Activated CD8-positive, alpha-beta T cell treated with anti-CD3 and anti-CD28 coated beads for 36 hours (primary cell): ENCODE measurements at regions of chr12 and their contacts with region 1.

Region 1: DNA sequence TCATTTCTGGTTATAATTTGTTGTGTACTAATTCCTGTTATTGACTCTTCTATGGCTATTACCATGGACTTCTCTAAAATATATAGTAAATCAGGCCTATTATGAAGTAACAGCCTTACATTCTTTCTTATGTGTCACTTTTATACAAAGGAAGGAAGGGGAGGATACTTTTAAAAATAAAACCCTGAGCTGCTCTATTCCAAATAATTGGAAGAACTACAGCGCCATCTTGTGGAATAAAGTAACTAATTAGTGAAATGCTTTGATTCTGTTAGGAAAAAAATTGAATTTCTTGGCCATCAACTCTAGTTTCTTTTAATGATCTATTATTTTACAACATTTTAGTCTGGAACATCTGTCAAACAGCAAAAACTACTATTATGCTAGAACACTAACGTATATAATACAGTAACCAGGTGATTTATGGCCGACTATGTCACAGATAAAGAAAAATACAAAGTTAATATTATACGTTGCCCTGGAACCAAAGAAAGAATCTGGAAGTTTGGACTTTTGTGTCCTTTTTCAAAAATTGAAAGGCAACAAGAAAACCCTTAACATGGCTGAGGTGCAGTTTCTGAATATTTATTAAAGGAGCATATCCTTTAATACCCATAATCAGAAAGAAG is 55.0 kb upstream of the NELL2 start:
- DNase-seq: no peak
- ATAC-seq: peak; percentile 58
- H3K4me3 Mint-ChIP-seq: no peak overlapping the region
- H3K27ac Mint-ChIP-seq: no peak overlapping the region
- H3K4me1 Mint-ChIP-seq: no peaks in the 10 kb centered on the region
- H3K27me3 Mint-ChIP-seq: no peaks in the 10 kb centered on the region
- CTCF ChIP-seq: peak; percentile 70

Region 2: DNA sequence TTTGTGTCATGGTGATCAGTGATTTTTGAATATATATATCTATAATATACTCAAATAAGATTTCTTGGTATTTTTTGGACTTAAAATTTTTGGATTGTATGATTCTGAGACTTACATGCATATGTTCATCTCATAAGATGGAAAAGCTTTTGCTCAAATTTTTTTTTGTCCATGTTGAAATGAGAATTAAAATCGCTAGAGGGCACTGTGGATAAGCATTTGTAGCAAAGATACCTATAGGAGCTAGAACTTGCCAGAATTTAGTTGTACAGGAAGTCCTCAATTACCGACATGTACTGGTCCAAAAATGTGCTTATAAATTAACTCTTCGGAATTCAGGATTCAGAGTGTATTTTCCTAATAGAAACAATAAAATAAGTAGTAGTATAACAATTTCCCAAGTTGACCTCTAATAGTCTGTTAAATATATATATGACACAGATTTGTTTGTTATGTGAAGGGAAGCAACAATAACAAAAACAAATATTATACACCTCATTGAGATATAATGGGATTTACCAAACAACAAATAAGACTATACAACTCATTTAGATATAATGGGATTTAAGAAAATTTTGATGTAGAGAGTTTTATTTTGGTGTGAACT is 915.6 kb before region 1 on chr12:
- CTCF ChIA-PET with region 1: interaction called, 11 read pairs
- POLR2A ChIA-PET with region 1: no interaction called
- intact Hi-C with region 1: loop called (anchors 10 kb)
- DNase-seq: no peak
- ATAC-seq: peak; percentile 47
- H3K4me3 Mint-ChIP-seq: no peak overlapping the region
- H3K27ac Mint-ChIP-seq: no peak overlapping the region
- H3K4me1 Mint-ChIP-seq: no peaks in the 10 kb centered on the region
- H3K27me3 Mint-ChIP-seq: no peaks in the 10 kb centered on the region
- CTCF ChIP-seq: peak; percentile 66

Region 3: DNA sequence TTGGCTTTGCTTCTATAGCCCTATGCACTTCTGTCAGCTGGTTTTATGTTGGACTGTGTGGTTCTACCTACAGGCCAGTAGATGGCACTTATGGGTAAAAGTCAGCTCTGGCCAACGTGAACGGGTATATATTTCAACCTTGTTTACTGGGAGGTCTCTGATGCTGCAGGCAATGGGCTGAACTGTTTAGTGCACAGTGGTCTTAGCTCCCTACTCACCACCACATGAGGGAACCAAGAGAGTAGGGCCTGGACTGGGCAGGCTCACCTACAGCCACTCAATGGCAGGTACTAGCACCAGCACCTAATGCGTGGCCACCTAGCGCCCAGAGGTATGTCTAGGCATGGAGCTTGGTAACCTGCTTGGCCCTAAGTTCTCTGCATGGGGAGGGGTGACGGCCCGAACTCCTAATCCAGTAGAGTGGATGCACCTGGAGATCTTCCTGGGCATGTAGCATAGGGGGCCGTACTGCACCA is 613.4 kb before region 1 on chr12:
- CTCF ChIA-PET with region 1: interaction called, 7 read pairs
- POLR2A ChIA-PET with region 1: no interaction called
- intact Hi-C with region 1: loop called (anchors 5 kb)
- DNase-seq: peak; percentile 5
- ATAC-seq: peak; percentile 83
- H3K4me3 Mint-ChIP-seq: no peak overlapping the region
- H3K27ac Mint-ChIP-seq: no peak overlapping the region
- H3K4me1 Mint-ChIP-seq: no peaks in the 10 kb centered on the region
- H3K27me3 Mint-ChIP-seq: no peaks in the 10 kb centered on the region
- CTCF ChIP-seq: peak; percentile 34

Region 4: DNA sequence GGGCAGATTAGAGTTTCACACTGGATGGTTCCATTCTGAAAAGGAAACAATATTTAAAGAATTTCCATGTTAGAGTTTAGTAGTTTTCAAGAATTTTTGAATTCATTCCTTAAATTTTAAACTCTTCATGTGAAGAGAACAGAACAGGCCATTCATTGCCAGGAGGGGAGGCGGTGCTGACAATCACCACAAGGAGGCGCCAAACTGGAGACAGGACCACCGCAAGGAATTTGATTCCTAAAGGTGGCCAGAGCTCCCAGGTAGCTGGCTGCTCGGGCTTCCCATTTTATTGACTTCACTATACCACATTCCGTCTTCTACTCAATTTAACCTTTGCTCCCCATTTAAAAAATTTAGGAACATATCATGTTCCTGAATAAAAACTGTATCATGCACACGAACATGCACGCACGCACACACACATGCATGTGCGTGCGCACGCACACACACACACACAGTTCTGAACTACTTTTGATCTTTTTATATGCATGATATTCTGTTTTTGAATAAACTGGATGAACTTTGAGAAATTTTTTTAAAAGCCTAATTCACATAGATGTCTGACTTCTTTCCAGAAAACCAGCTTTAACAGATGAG is 156.2 kb before region 1 on chr12:
- CTCF ChIA-PET with region 1: interaction called, 13 read pairs
- POLR2A ChIA-PET with region 1: interaction called, 5 read pairs
- intact Hi-C with region 1: loop called (anchors 2 kb)
- DNase-seq: peak; percentile 74
- ATAC-seq: peak; percentile 53
- H3K4me3 Mint-ChIP-seq: no peak overlapping the region
- H3K27ac Mint-ChIP-seq: no peak overlapping the region
- H3K4me1 Mint-ChIP-seq: peaks cover 6% of the 10 kb centered on the region
- H3K27me3 Mint-ChIP-seq: no peaks in the 10 kb centered on the region
- CTCF ChIP-seq: peak; percentile 89

Region 5: DNA sequence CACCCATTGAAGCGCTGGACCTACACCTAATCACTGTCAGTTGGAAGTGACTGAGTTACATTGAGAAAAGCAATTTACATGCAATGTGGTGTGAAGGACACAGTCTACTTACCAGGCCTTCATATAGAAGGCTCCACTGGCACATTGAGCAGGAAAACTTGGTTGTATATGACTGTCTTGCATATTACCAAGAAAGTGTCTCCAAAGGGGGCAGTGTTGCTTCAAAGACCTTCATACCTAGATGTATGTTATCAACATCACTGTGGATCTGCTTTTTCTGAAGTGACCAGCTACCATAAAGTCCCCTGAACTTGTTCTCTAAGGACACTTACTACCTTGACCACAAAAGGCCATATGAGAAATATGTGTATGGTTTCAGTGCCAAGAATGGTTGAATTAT is 119.0 kb before region 1 on chr12:
- CTCF ChIA-PET with region 1: interaction called, 27 read pairs
- POLR2A ChIA-PET with region 1: no interaction called
- intact Hi-C with region 1: no loop called
- DNase-seq: peak; percentile 71
- ATAC-seq: peak; percentile 80
- H3K4me3 Mint-ChIP-seq: no peak overlapping the region
- H3K27ac Mint-ChIP-seq: peak overlapping the region; percentile 62
- H3K4me1 Mint-ChIP-seq: peaks cover 61% of the 10 kb centered on the region
- H3K27me3 Mint-ChIP-seq: no peaks in the 10 kb centered on the region
- CTCF ChIP-seq: peak; percentile 67

Region 6: GRCh38 chr12:44993161-44993560 is 62.1 kb after region 1 on chr12:
- CTCF ChIA-PET with region 1: no interaction called
- POLR2A ChIA-PET with region 1: no interaction called
- intact Hi-C with region 1: no loop called
- DNase-seq: no peak
- ATAC-seq: no peak
- H3K4me3 Mint-ChIP-seq: no peak overlapping the region
- H3K27ac Mint-ChIP-seq: no peak overlapping the region
- H3K4me1 Mint-ChIP-seq: no peaks in the 10 kb centered on the region
- H3K27me3 Mint-ChIP-seq: peaks cover 14% of the 10 kb centered on the region
- CTCF ChIP-seq: no peak